ENCODE measurements at regions of chr1 and their contacts with region 1.

Region 1: DNA sequence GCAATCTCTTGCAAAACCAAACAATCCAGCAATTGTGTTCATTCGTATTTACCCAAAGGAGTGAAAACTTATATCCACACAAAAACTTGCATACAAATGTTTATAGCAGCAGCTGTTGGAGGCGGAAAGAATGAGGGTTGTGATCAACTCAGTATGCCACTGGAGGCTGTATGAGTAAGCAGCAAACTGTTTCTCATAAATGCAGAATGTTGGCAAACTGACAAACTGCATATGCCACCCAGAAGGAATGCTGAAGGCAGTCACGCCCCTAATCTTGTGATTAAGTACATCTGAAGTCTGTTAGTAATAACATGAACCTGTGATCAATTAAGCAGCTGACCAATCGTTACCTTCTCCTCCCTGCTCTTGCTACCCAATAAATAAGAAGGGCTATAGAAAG is 60.5 kb upstream of the CR2 start:
- DNase-seq: no peak
- ATAC-seq: no peak
- H3K4me3 ChIP-seq: no peak overlapping the region
- H3K27ac ChIP-seq: no peak overlapping the region
- H3K4me1 ChIP-seq: no peaks in the 10 kb centered on the region
- H3K27me3 ChIP-seq: no peaks in the 10 kb centered on the region; a peak in 1 of 5 replicates
- CTCF ChIP-seq: no peak
- EP300 ChIP-seq: no peak
- POLR2A ChIP-seq: no peak
- RAD21 ChIP-seq: no peak

Region 2: GRCh38 chr1:206992790-206993189 is 400.8 kb before region 1 on chr1:
- CTCF ChIA-PET with region 1: no interaction called
- POLR2A ChIA-PET with region 1: no interaction called
- in situ Hi-C with region 1: no loop called
- intact Hi-C with region 1: no loop called
- DNase-seq: peak; percentile 19
- ATAC-seq: peak; percentile 45; the same call in 1 of the 3 replicates
- H3K4me3 ChIP-seq: no peak overlapping the region; a peak in 1 of 6 replicates
- H3K27ac ChIP-seq: no peak overlapping the region
- H3K4me1 ChIP-seq: peaks cover 12% of the 10 kb centered on the region
- H3K27me3 ChIP-seq: peaks cover 0 to 13% of the 10 kb centered on the region in 2 experiments; a peak in 1 of 5 replicates
- CTCF ChIP-seq: no peak
- EP300 ChIP-seq: no peak; a peak in 1 of 4 replicates
- POLR2A ChIP-seq: no peak
- RAD21 ChIP-seq: no peak

Region 3: GRCh38 chr1:207259391-207259790 is 134.2 kb before region 1 on chr1:
- CTCF ChIA-PET with region 1: no interaction called
- POLR2A ChIA-PET with region 1: no interaction called
- in situ Hi-C with region 1: loop called (anchors 25 kb)
- intact Hi-C with region 1: no loop called
- DNase-seq: peak; percentile 23
- ATAC-seq: peak; percentile 72
- H3K4me3 ChIP-seq: no peak overlapping the region
- H3K27ac ChIP-seq: no peak overlapping the region
- H3K4me1 ChIP-seq: no peaks in the 10 kb centered on the region
- H3K27me3 ChIP-seq: no peaks in the 10 kb centered on the region
- CTCF ChIP-seq: peak; percentile 53
- EP300 ChIP-seq: no peak
- POLR2A ChIP-seq: no peak
- RAD21 ChIP-seq: 0 out of 2 replicates have a peak, but pooled peaks have one; percentile 29

Region 4: DNA sequence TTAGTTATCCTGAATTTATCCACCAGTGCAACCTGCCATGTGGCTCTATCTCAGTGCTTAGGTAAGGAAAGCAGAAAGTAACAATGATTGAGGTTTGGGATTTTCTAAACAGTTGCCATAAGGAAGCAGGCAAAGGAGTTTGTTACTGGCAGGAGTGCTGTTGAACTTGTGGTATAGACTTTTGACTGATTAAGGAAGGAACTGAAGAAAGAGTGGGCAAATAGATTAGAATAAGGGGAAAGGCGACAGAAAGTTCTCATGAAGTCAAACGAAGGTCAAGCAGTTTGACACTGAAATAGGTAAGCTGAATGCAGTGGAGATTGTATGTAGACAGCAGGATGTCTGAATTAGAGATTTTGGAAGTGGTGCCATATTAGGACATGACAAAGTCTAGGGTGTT is 36.4 kb after region 1 on chr1:
- CTCF ChIA-PET with region 1: no interaction called
- POLR2A ChIA-PET with region 1: no interaction called
- in situ Hi-C with region 1: no loop called
- intact Hi-C with region 1: no loop called
- DNase-seq: no peak
- ATAC-seq: no peak
- H3K4me3 ChIP-seq: no peak overlapping the region
- H3K27ac ChIP-seq: no peak overlapping the region
- H3K4me1 ChIP-seq: no peaks in the 10 kb centered on the region
- H3K27me3 ChIP-seq: no peaks in the 10 kb centered on the region; a peak in 1 of 5 replicates
- CTCF ChIP-seq: no peak
- EP300 ChIP-seq: no peak
- POLR2A ChIP-seq: no peak
- RAD21 ChIP-seq: no peak

Region 5: DNA sequence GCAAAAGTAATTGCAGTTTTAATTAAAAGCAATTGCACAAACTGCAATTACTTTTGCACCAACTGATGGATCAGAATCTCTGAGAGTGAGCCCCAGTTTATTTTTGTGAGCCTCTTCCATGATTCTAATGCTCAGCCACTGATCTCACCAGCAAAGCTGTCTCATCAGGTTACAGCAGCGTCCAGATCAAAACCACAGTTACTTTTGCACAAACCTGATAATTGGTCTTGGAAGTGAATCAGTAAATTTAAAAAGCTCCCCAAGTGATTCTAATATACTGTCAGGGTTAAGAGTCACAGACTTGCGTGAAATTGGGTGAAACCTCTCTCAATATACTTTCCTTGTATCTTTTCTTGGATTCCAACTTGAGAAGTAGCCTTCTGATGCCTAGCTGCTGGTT is 47.0 kb after region 1 on chr1:
- CTCF ChIA-PET with region 1: no interaction called
- POLR2A ChIA-PET with region 1: no interaction called
- in situ Hi-C with region 1: no loop called
- intact Hi-C with region 1: no loop called
- DNase-seq: no peak
- ATAC-seq: no peak
- H3K4me3 ChIP-seq: no peak overlapping the region
- H3K27ac ChIP-seq: no peak overlapping the region
- H3K4me1 ChIP-seq: no peaks in the 10 kb centered on the region
- H3K27me3 ChIP-seq: peaks cover 0 to 13% of the 10 kb centered on the region in 2 experiments; a peak in 2 of 5 replicates
- CTCF ChIP-seq: no peak
- EP300 ChIP-seq: no peak
- POLR2A ChIP-seq: no peak
- RAD21 ChIP-seq: no peak

Region 6: DNA sequence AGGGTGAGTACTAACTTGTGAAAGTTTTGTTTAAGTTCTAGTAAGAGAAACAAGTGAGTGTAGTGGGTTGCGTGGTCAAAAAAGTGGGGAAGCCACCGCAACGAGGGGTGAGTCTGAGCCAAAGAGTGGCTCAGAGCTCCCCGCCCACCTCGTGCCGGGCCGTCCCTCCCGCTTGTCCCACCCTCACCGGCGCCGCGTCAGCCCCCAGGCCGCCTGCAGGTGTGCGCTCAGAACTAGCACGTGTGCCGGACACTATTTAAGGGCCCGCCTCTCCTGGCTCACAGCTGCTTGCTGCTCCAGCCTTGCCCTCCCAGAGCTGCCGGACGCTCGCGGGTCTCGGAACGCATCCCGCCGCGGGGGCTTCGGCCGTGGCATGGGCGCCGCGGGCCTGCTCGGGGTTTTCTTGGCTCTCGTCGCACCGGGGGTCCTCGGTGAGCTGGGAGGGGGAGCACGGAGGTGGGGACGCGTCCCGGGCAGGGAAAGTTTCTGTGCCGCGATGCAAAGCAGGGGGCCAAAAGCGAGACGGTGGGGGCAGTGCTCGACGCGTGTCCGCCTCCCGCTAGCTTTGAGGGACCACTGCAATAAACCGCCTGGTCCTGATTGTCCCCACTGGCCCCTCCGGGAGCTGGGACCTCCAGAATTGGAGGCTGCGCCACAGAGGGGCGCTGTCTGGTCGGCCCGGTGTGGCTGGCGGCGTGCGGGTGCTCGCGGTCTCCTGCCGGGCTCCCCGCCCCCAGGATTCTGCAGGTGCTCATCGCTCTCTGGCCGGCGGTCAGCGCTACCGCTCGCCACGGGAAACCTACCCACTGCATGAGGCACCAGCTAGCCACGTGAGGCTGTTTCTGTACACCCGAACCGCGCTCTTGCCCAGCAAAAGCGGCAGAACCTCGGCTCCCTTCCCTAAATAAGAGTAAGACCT is 60.7 kb after region 1 on chr1 and contains the start of gene CR2:
- CTCF ChIA-PET with region 1: no interaction called
- POLR2A ChIA-PET with region 1: no interaction called
- in situ Hi-C with region 1: no loop called
- intact Hi-C with region 1: loop called (anchors 10 kb)
- DNase-seq: peak; percentile 3
- ATAC-seq: peak; percentile 94
- H3K4me3 ChIP-seq: peak within 1 kb of the TSS; percentile 26 to 64 (median 29); a peak in 5 of 6 replicates
- H3K27ac ChIP-seq: no peak within 1 kb of the TSS
- H3K4me1 ChIP-seq: peaks cover 13% of the 10 kb centered on the region; the same call in 1 of the 2 replicates
- H3K27me3 ChIP-seq: peaks cover 7 to 29% of the 10 kb centered on the region in 2 experiments
- CTCF ChIP-seq: peak; percentile 51
- EP300 ChIP-seq: no peak
- POLR2A ChIP-seq: no peak
- RAD21 ChIP-seq: no peak
- total RNA-seq, gene CR2: not detected in 2 replicates

Measured in HepG2 (cell line).